Naive thymus-derived CD8-positive, alpha-beta T cell (primary cell): ENCODE measurements at regions of chr12 and their contacts with region 1.

Region 1: DNA sequence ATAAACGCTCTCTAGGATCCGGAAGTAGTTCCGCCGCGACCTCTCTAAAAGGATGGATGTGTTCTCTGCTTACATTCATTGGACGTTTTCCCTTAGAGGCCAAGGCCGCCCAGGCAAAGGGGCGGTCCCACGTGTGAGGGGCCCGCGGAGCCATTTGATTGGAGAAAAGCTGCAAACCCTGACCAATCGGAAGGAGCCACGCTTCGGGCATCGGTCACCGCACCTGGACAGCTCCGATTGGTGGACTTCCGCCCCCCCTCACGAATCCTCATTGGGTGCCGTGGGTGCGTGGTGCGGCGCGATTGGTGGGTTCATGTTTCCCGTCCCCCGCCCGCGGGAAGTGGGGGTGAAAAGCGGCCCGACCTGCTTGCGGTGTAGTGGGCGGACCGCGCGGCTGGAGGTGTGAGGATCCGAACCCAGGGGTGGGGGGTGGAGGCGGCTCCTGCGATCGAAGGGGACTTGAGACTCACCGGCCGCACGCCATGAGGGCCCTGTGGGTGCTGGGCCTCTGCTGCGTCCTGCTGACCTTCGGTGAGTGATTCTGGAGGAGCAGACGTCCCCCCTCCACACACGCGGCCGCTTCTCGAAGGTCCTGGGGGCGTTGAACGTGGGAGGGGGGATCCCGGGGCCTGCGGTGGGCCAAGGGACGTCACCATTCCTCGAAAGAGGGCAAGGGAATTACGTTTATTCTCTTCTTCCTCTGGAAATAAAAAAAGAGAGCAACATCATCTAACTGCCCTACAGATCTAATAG is at the start of gene HSP90B1:
- DNase-seq: peak; percentile 96 to 100 (median 100)
- ATAC-seq: peak; percentile 76 to 77
- H3K4me3 Mint-ChIP-seq: peak within 1 kb of the TSS; percentile 83 to 98 (median 94)
- H3K27ac Mint-ChIP-seq: peak within 1 kb of the TSS; percentile 97 to 100 (median 100)
- H3K4me1 Mint-ChIP-seq: peaks cover 31 to 73% (median 64%) of the 10 kb centered on the region in 4 donors
- H3K27me3 Mint-ChIP-seq: peaks cover 0 to 4% (median 0%) of the 10 kb centered on the region in 5 donors
- polyA plus RNA-seq, gene HSP90B1: 174 to 223 (median 206) TPM

Region 2: GRCh38 chr12:103821773-103822172 is 108.4 kb before region 1 on chr12:
- POLR2A ChIA-PET with region 1: no interaction called
- DNase-seq: no peak
- ATAC-seq: no peak
- H3K4me3 Mint-ChIP-seq: no peak overlapping the region
- H3K27ac Mint-ChIP-seq: no peak overlapping the region
- H3K4me1 Mint-ChIP-seq: peaks cover 0 to 2% (median 0%) of the 10 kb centered on the region in 4 donors
- H3K27me3 Mint-ChIP-seq: no peaks in the 10 kb centered on the region

Region 3: DNA sequence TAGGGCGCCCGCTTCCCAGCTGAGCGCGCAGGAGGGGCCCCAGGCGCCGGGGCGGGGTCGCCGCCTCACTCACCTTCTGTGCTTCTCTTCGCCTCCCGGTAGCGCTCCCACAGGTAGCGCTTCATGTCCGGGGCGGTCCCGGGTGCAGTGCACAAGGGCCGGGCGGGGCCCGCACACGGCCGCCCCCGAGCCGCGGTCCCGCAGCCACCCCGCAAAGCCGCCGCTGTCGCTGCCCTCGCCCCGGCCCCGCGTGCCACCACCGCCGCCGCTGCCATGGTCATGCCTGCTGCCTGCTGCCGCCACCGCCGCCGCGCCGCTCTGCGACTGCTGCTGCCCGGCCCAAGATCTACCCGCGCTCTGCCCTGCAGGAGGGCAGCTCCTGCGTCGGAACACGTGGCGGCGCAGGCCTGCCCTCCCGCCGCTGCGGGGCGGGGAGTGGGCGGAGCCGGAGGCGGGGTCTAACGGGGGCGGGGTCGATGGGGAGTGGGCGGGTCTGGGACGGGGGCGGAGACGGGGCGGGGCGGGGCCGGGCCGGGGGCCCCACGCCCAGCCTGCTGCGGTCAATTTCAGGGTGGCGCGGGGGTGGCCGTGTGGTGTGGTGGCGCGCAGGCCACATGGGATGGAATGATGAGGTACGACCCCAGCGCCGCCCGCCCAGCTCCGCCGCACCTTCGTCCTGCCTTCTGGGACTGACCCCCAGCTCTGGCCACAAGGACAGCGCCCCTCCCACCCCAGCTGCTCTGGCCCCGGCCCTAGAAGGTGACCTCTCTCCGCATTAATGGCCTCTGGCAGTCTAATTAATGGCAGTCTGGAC is 89.1 kb before region 1 on chr12 and contains the start of gene NT5DC3:
- POLR2A ChIA-PET with region 1: interaction called, 11 read pairs
- DNase-seq: peak; percentile 72 to 90 (median 84)
- ATAC-seq: peak; percentile 88 to 90
- H3K4me3 Mint-ChIP-seq: peak within 1 kb of the TSS; percentile 83 to 93 (median 86)
- H3K27ac Mint-ChIP-seq: peak within 1 kb of the TSS; percentile 68 to 92 (median 81)
- H3K4me1 Mint-ChIP-seq: peaks cover 3 to 19% (median 14%) of the 10 kb centered on the region in 4 donors
- H3K27me3 Mint-ChIP-seq: peaks cover 0 to 1% (median 0%) of the 10 kb centered on the region in 5 donors
- polyA plus RNA-seq, gene NT5DC3: 0.33 to 0.89 (median 0.89) TPM

Region 4: GRCh38 chr12:103884316-103884715 is 45.9 kb before region 1 on chr12:
- POLR2A ChIA-PET with region 1: interaction called, 38 read pairs
- DNase-seq: peak; percentile 19 to 83 (median 46)
- ATAC-seq: peak; percentile 67 to 68
- H3K4me3 Mint-ChIP-seq: peak overlapping the region in 3 of 10 donors; percentile 13 to 54 (median 30)
- H3K27ac Mint-ChIP-seq: peak overlapping the region in 8 of 10 donors; percentile 36 to 90 (median 78)
- H3K4me1 Mint-ChIP-seq: peaks cover 9 to 47% (median 30%) of the 10 kb centered on the region in 4 donors
- H3K27me3 Mint-ChIP-seq: no peaks in the 10 kb centered on the region

Region 5: GRCh38 chr12:103908866-103909265 is 21.3 kb before region 1 on chr12:
- POLR2A ChIA-PET with region 1: interaction called, 180 read pairs
- DNase-seq: no peak
- ATAC-seq: no peak
- H3K4me3 Mint-ChIP-seq: peak overlapping the region in 5 of 10 donors; percentile 9 to 63 (median 55)
- H3K27ac Mint-ChIP-seq: peak overlapping the region; percentile 2 to 88 (median 58)
- H3K4me1 Mint-ChIP-seq: peaks cover 29 to 57% (median 45%) of the 10 kb centered on the region in 4 donors
- H3K27me3 Mint-ChIP-seq: peaks cover 0 to 1% (median 0%) of the 10 kb centered on the region in 5 donors

Region 6: GRCh38 chr12:103947871-103948555 is 17.8 kb after region 1 on chr12:
- POLR2A ChIA-PET with region 1: interaction called, 11 read pairs
- DNase-seq: no peak
- ATAC-seq: no peak
- H3K4me3 Mint-ChIP-seq: no peak overlapping the region
- H3K27ac Mint-ChIP-seq: peak overlapping the region; percentile 14 to 74 (median 42)
- H3K4me1 Mint-ChIP-seq: peaks cover 4 to 14% (median 5%) of the 10 kb centered on the region in 4 donors
- H3K27me3 Mint-ChIP-seq: no peaks in the 10 kb centered on the region

Region 7: DNA sequence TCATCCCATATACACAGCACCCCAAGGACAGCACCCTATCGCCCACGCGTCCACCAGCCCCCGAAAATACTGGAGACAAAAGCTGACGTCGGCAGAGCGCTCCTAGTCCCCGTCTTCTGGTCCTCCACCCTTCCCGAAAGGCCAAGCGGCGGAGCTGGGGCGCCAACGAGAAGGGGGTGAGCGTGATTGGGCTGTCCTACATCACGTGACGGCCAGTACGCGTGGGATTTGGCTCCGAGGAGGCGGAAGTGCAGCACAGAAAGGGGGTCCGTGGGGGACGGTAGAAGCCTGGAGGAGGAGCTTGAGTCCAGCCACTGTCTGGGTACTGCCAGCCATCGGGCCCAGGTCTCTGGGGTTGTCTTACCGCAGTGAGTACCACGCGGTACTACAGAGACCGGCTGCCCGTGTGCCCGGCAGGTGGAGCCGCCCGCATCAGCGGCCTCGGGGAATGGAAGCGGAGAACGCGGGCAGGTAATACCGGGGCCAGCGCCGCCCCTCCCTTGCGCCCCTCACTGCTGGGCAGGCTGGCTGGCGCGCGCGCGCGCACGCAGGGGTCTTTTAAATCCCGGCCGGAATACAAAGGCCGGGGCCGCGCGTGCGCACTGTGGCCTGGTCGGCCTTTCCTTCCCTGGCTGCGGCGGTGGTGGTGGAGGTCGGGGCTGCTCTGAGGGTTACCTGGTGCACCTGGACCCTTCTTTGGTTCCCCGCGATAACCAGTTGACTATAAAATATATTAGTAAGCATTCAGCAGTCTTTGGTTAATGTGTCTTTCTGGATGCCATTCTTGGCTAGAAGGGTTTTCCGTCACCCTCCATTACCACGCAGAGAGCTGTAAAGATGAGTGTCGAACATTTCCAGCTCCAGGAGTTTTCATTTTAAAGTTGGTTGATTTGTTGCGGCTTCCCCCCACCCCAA is 35.6 kb after region 1 on chr12 and contains the start of gene TDG:
- POLR2A ChIA-PET with region 1: interaction called, 141 read pairs
- DNase-seq: peak; percentile 86 to 99 (median 97)
- ATAC-seq: peak; percentile 93 to 94
- H3K4me3 Mint-ChIP-seq: peak within 1 kb of the TSS; percentile 96 to 99 (median 98)
- H3K27ac Mint-ChIP-seq: peak within 1 kb of the TSS; percentile 93 to 99 (median 99)
- H3K4me1 Mint-ChIP-seq: peaks cover 24 to 64% (median 60%) of the 10 kb centered on the region in 4 donors
- H3K27me3 Mint-ChIP-seq: no peaks in the 10 kb centered on the region
- polyA plus RNA-seq, gene TDG: 19.0 to 21.4 (median 20.0) TPM

Region 8: DNA sequence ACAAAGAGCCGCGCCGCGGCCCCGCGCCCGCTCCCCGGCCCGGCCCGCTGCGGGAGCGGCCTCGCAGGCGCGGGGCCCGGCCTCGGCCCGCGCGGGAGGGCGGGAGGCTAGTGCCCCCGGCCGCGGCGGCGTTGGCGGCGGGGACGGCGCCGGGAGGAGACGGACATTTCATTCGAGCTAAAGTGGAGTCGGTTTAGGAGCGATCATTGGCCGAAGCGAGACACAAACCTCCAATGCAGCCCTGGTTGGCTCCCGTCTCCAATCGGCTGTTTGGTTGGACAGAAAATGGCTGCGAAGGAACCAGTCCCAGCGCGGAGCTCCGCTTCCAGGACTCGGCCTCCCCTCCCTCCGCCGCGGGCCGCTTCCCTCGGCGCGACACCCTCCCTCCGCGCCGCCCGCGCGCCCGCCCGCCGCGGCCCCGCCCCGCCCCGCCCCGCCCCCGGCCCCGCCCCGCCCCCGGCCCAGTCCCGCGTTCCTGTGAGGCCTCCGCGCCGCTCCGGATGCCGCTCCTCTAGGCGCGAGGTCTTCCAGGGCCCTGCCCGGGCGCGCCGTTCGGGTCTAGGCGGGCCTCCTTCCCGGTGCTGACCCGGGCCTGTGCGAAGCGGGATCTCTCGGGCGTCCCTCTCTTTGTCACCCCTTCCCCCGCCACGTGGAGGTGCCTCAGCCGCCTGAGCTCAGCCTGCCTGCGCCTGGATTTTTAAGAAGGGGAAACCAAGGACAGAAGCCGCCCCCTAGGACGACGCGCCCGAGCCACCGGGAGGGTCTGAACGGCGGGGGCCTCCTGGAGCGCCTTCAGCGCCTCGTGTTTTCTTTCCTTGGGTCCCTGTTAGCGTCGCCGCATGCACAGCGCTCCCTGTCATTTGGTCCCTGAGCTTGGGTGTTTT is 207.9 kb after region 1 on chr12 and contains the start of gene NFYB:
- POLR2A ChIA-PET with region 1: interaction called, 29 read pairs
- DNase-seq: peak; percentile 85 to 96 (median 92)
- ATAC-seq: peak; percentile 96
- H3K4me3 Mint-ChIP-seq: peak within 1 kb of the TSS; percentile 72 to 94 (median 90)
- H3K27ac Mint-ChIP-seq: peak within 1 kb of the TSS; percentile 51 to 96 (median 92)
- H3K4me1 Mint-ChIP-seq: peaks cover 4 to 15% (median 7%) of the 10 kb centered on the region in 4 donors
- H3K27me3 Mint-ChIP-seq: no peaks in the 10 kb centered on the region
- polyA plus RNA-seq, gene NFYB: 26.0 to 38.8 (median 30.3) TPM